B cell (primary cell): ENCODE measurements at regions of chr6 and their contacts with region 1.

Region 1: GRCh38 chr6:7073821-7074525 is 33.8 kb upstream of the RREB1 start:
- DNase-seq: peak; percentile 88
- ATAC-seq: peak; percentile 100
- H3K4me3 ChIP-seq: peak overlapping the region in 3 of 5 experiments; percentile 21 to 47 (median 37)
- H3K4me3 Mint-ChIP-seq: peak overlapping the region; percentile 72
- H3K27ac ChIP-seq: peak overlapping the region; percentile 43 to 75
- H3K27ac Mint-ChIP-seq: peak overlapping the region; percentile 79
- H3K4me1 ChIP-seq: peaks cover 6 to 17% of the 10 kb centered on the region in 2 donors
- H3K4me1 Mint-ChIP-seq: peaks cover 10% of the 10 kb centered on the region
- H3K27me3 ChIP-seq: no peaks in the 10 kb centered on the region
- H3K27me3 Mint-ChIP-seq: no peaks in the 10 kb centered on the region
- CTCF ChIP-seq: no peak

Region 2: DNA sequence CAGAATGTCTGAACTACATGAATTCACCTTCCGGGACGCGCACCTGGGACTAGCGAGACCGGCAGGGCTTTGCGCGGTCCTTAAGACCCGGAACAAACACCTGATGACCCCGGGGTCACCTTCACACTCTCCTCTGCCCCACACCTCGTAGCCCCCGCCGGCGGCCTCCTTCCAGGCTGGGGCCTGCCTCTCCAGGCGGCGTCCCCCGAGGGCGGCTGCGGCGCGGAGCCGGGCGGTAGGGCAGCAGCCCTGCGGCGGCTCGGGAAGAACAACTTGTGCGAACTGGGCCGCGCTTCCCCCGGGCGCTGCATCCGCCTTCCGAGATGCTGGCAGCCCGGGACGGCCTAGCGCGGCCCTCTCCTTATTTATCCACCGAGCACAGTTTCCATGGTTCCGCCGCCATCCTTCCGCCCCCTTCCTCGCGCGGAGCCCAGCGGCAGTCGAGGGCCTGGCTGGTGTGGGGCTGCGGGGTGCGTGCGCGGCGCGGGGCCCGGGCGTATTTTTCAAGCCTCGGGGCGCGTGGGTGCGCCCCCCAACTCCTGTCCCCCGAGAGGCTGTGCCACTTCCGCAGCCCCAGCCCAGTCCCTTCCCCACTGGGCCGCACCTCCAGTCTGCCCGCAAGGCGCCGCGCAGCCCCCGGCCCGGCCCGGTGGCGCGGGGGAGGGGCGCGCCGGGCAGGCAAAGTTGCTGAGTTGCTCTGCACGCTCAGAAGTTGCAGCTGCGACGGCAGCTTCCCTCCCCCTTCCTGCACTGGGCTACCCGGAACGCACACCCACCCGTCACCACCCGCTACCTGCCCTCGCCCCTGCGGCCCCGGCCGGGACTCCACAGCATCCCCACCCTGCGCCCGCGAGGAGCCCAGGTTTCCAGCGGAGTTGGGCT is 22.5 kb before region 1 on chr6:
- CTCF ChIA-PET with region 1: interaction called, 3 read pairs
- POLR2A ChIA-PET with region 1: interaction called, 3 read pairs
- intact Hi-C with region 1: loop called (anchors 2 kb)
- DNase-seq: peak; percentile 74
- ATAC-seq: peak; percentile 78
- H3K4me3 ChIP-seq: peak overlapping the region; percentile 16 to 69 (median 58)
- H3K4me3 Mint-ChIP-seq: peak overlapping the region; percentile 86
- H3K27ac ChIP-seq: peak overlapping the region in 1 of 2 donors; percentile 23
- H3K27ac Mint-ChIP-seq: peak overlapping the region; percentile 71
- H3K4me1 ChIP-seq: peaks cover 14 to 16% of the 10 kb centered on the region in 2 donors
- H3K4me1 Mint-ChIP-seq: peaks cover 14% of the 10 kb centered on the region
- H3K27me3 ChIP-seq: no peaks in the 10 kb centered on the region
- H3K27me3 Mint-ChIP-seq: no peaks in the 10 kb centered on the region
- CTCF ChIP-seq: no peak

Region 3: DNA sequence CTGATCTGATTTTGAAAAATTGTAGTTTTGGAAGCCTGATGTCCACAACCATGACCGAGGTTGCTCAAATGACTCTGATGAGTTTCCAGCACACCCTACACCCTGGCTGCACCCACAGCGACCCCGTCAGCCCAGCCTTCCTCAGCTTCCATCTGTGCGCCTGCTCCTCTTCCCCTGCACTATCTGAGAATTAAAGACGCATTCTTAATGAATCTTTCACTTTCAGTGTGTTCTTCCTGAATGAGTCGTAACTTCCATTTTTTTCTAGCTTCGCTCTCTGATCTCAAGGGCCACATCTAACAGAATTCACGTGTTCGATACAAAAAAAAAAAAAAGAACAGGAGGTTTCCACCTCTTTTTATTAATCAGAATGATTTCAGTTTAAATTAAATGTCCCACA is 12.5 kb after region 1 on chr6:
- CTCF ChIA-PET with region 1: interaction called, 8 read pairs
- POLR2A ChIA-PET with region 1: interaction called, 8 read pairs
- intact Hi-C with region 1: loop called (anchors 1 kb)
- DNase-seq: peak; percentile 74
- ATAC-seq: peak; percentile 79
- H3K4me3 ChIP-seq: peak overlapping the region; percentile 30 to 89 (median 47)
- H3K4me3 Mint-ChIP-seq: peak overlapping the region; percentile 86
- H3K27ac ChIP-seq: peak overlapping the region; percentile 50 to 73
- H3K27ac Mint-ChIP-seq: peak overlapping the region; percentile 88
- H3K4me1 ChIP-seq: peaks cover 23 to 24% of the 10 kb centered on the region in 2 donors
- H3K4me1 Mint-ChIP-seq: peaks cover 27% of the 10 kb centered on the region
- H3K27me3 ChIP-seq: no peaks in the 10 kb centered on the region
- H3K27me3 Mint-ChIP-seq: no peaks in the 10 kb centered on the region
- CTCF ChIP-seq: no peak

Region 4: GRCh38 chr6:7140631-7141378 is 66.8 kb after region 1 on chr6:
- CTCF ChIA-PET with region 1: no interaction called
- POLR2A ChIA-PET with region 1: no interaction called
- intact Hi-C with region 1: loop called (anchors 5 kb)
- DNase-seq: peak; percentile 84
- ATAC-seq: peak; percentile 84
- H3K4me3 ChIP-seq: peak overlapping the region; percentile 62 to 73 (median 69)
- H3K4me3 Mint-ChIP-seq: peak overlapping the region; percentile 87
- H3K27ac ChIP-seq: peak overlapping the region; percentile 74 to 79
- H3K27ac Mint-ChIP-seq: peak overlapping the region; percentile 90
- H3K4me1 ChIP-seq: peaks cover 53 to 66% of the 10 kb centered on the region in 2 donors
- H3K4me1 Mint-ChIP-seq: peaks cover 74% of the 10 kb centered on the region
- H3K27me3 ChIP-seq: no peaks in the 10 kb centered on the region
- H3K27me3 Mint-ChIP-seq: no peaks in the 10 kb centered on the region
- CTCF ChIP-seq: no peak